ENCODE measurements at regions of chr13 and their contacts with region 1.

Region 1: GRCh38 chr13:25114220-25114619 is 18.3 kb downstream of the PABPC3 start:
- DNase-seq: peak; percentile 71
- H3K4me3 ChIP-seq: no peak overlapping the region; a peak in 1 of 4 replicates
- H3K27ac ChIP-seq: no peak overlapping the region
- H3K4me1 ChIP-seq: no peaks in the 10 kb centered on the region
- H3K27me3 ChIP-seq: peaks cover 9% of the 10 kb centered on the region; the same call in 1 of the 2 replicates
- CTCF ChIP-seq: peak; percentile 89
- EP300 ChIP-seq: no peak
- RAD21 ChIP-seq: peak; percentile 71

Region 2: GRCh38 chr13:25085125-25085742 is 29.0 kb before region 1 on chr13:
- CTCF ChIA-PET with region 1: interaction called, 27 read pairs
- POLR2A ChIA-PET with region 1: no interaction called
- DNase-seq: peak; percentile 51
- H3K4me3 ChIP-seq: no peak overlapping the region; a peak in 1 of 4 replicates
- H3K27ac ChIP-seq: no peak overlapping the region
- H3K4me1 ChIP-seq: no peaks in the 10 kb centered on the region
- H3K27me3 ChIP-seq: peaks cover 16% of the 10 kb centered on the region; the same call in 1 of the 2 replicates
- CTCF ChIP-seq: peak; percentile 70
- EP300 ChIP-seq: no peak
- RAD21 ChIP-seq: peak; percentile 60

Region 3: GRCh38 chr13:25095862-25096453 is 18.3 kb before region 1 on chr13 and contains the start of gene PABPC3:
- CTCF ChIA-PET with region 1: interaction called, 13 read pairs
- POLR2A ChIA-PET with region 1: no interaction called
- DNase-seq: no peak
- H3K4me3 ChIP-seq: no peak within 1 kb of the TSS
- H3K27ac ChIP-seq: no peak within 1 kb of the TSS
- H3K4me1 ChIP-seq: no peaks in the 10 kb centered on the region
- H3K27me3 ChIP-seq: peaks cover 8% of the 10 kb centered on the region; the same call in 1 of the 2 replicates
- CTCF ChIP-seq: no peak
- EP300 ChIP-seq: no peak
- RAD21 ChIP-seq: no peak
- polyA plus RNA-seq, gene PABPC3: 0.02 and 0.03 TPM in 2 replicates